Naive thymus-derived CD4-positive, alpha-beta T cell (primary cell): ENCODE measurements at regions of chr6 and their contacts with region 1.

Region 1: DNA sequence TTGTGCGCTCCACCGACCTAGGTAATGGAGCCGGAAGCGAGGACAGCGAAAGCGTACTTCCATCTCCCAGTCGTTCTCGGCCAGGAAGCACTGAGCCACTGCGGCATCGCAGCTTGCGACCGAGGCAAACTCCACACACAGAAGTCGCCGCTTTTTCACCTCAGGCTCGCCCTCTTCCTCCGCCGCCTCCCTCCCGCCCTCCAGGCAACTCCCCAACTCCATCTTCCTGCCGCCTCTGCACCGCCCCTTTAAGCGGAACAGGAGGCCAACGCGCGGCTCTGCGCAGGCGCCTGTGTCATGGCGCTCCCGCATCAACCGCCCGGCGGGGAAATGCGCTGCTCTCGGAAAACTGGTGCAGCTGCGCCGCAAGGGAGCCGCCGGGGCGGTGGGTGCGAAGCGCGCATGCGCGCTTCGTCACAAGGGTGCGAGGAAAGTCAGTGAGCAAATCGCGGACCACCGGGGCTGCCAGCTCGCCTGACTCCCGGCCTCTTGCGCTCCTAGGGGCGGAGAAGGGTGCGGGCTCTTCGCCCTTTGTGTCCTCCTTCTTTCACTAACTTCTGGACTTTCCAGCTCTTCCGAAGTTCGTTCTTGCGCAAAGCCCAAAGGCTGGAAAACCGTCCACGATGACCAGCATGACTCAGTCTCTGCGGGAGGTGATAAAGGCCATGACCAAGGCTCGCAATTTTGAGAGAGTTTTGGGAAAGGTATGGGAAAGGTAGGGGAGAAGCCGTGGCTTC is at the starts of genes ACOT13 and TDP2:
- DNase-seq: peak; percentile 93 to 97 (median 96)
- ATAC-seq: peak; percentile 97
- H3K4me3 ChIP-seq: peak within 1 kb of the TSS; percentile 91
- H3K4me3 Mint-ChIP-seq: peak within 1 kb of the TSS; percentile 93 to 100 (median 98)
- H3K27ac ChIP-seq: peak within 1 kb of the TSS; percentile 88
- H3K27ac Mint-ChIP-seq: peak within 1 kb of the TSS; percentile 91 to 99 (median 98)
- H3K4me1 ChIP-seq: peaks cover 19 to 27% of the 10 kb centered on the region in 2 donors
- H3K4me1 Mint-ChIP-seq: peaks cover 28 to 70% (median 68%) of the 10 kb centered on the region in 7 donors
- H3K27me3 ChIP-seq: no peaks in the 10 kb centered on the region
- H3K27me3 Mint-ChIP-seq: no peaks in the 10 kb centered on the region
- total RNA-seq, gene ACOT13: 4.0 to 20.0 (median 12.5) TPM
- total RNA-seq, gene TDP2: 38.6 to 69.7 (median 48.2) TPM

Region 2: GRCh38 chr6:24646782-24647181 is 20.0 kb before region 1 on chr6:
- CTCF ChIA-PET with region 1: no interaction called
- POLR2A ChIA-PET with region 1: interaction called, 14 read pairs
- intact Hi-C with region 1: loop called (anchors 1 kb)
- DNase-seq: no peak
- ATAC-seq: no peak
- H3K4me3 ChIP-seq: no peak overlapping the region
- H3K4me3 Mint-ChIP-seq: peak overlapping the region; percentile 82 to 98 (median 88)
- H3K27ac ChIP-seq: peak overlapping the region; percentile 16
- H3K27ac Mint-ChIP-seq: peak overlapping the region in 6 of 9 donors; percentile 31 to 94 (median 70)
- H3K4me1 ChIP-seq: peaks cover 0 to 12% of the 10 kb centered on the region in 2 donors
- H3K4me1 Mint-ChIP-seq: peaks cover 6 to 23% (median 12%) of the 10 kb centered on the region in 7 donors
- H3K27me3 ChIP-seq: peaks cover 0 to 5% of the 10 kb centered on the region in 2 donors
- H3K27me3 Mint-ChIP-seq: peaks cover 1 to 27% (median 21%) of the 10 kb centered on the region in 5 donors

Region 3: DNA sequence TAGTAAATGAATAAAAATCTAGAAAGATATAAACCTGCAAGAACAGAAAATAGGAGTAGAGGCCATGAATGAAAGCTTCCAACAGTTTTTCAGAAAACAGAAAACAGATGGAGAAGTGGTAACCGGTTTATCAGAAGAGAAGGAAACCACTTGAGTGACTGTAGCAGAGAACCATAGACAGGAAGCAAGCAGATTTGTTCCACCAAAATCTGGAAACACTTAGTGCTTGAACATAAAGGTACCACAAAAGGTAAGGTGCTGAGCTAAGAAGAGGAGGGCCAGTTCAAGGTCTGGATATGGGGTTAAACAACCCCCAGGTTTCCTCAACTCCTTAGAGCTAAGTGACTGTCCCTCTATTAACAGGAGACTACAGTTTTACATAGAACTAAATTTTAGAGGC is 11.6 kb before region 1 on chr6:
- CTCF ChIA-PET with region 1: no interaction called
- POLR2A ChIA-PET with region 1: interaction called, 15 read pairs
- intact Hi-C with region 1: loop called in 1 of 2 experiments (anchors 1 kb)
- DNase-seq: no peak
- ATAC-seq: no peak
- H3K4me3 ChIP-seq: no peak overlapping the region
- H3K4me3 Mint-ChIP-seq: no peak overlapping the region
- H3K27ac ChIP-seq: peak overlapping the region; percentile 1
- H3K27ac Mint-ChIP-seq: peak overlapping the region in 8 of 9 donors; percentile 20 to 73 (median 54)
- H3K4me1 ChIP-seq: peaks cover 0 to 6% of the 10 kb centered on the region in 2 donors
- H3K4me1 Mint-ChIP-seq: peaks cover 13 to 55% (median 41%) of the 10 kb centered on the region in 7 donors
- H3K27me3 ChIP-seq: no peaks in the 10 kb centered on the region
- H3K27me3 Mint-ChIP-seq: no peaks in the 10 kb centered on the region

Region 4: DNA sequence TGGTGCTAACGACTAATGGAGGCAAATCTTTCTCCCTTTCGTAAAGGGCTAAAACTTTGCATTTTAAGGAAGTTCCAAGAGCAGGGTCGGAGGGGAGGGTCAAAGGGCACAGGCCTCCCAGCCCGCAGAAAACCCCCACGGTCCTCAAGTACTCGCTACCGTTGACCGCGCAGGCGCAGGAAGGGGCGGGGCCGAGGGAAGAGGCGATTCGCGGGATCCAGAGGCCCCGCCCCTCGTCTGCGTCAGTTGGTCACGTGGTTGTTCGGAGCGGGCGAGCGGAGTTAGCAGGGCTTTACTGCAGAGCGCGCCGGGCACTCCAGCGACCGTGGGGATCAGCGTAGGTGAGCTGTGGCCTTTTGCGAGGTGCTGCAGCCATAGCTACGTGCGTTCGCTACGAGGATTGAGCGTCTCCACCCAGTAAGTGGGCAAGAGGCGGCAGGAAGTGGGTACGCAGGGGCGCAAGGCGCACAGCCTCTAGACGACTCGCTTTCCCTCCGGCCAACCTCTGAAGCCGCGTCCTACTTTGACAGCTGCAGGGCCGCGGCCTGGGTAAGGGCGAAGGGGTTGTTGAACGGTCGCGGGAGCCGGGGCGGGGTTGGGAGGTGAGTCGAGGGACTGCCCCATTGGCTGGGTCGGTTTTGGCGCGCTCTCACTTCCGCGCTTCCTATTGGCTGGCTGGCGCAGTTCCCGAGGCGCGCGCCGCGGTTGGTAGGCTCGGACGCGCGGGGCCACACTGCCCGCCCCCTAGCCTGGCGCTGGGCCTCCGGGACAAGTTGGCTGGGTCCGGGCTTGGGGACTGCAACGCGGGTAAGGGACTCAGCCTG is 108.1 kb after region 1 on chr6 and contains the start of gene GMNN:
- CTCF ChIA-PET with region 1: no interaction called
- POLR2A ChIA-PET with region 1: interaction called, 10 read pairs
- intact Hi-C with region 1: loop called (anchors 1 kb)
- DNase-seq: peak; percentile 91 to 99 (median 94)
- ATAC-seq: peak; percentile 95
- H3K4me3 ChIP-seq: peak within 1 kb of the TSS; percentile 93
- H3K4me3 Mint-ChIP-seq: peak within 1 kb of the TSS; percentile 98 to 99 (median 98)
- H3K27ac ChIP-seq: peak within 1 kb of the TSS; percentile 90
- H3K27ac Mint-ChIP-seq: peak within 1 kb of the TSS; percentile 91 to 98 (median 97)
- H3K4me1 ChIP-seq: peaks cover 6 to 7% of the 10 kb centered on the region in 2 donors
- H3K4me1 Mint-ChIP-seq: peaks cover 10 to 38% (median 21%) of the 10 kb centered on the region in 7 donors
- H3K27me3 ChIP-seq: no peaks in the 10 kb centered on the region
- H3K27me3 Mint-ChIP-seq: no peaks in the 10 kb centered on the region
- total RNA-seq, gene GMNN: 5.1 to 54.6 (median 7.0) TPM